ENCODE measurements at regions of chr9 and their contacts with region 1.

Region 1: DNA sequence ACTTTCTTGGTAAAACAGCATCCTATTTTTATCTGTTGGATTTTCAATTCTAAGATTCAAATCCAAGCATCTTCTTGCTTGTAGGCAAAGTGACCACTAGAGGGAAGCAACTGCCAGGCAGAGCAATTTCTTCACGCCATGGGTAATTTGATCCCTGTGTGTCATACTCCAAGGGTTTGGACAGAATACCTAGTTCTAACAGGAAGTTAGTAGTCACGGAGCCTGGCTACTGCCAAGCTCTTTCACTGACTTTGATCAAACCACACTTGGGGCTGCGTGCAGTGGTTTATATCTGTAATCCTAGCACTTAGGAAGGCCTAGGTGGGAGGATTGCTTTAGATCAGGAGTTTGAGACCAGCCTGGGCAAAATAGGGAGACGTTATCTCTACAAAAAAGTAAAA is 473.6 kb upstream of the TNC start:
- DNase-seq: peak; percentile 66
- H3K4me3 Mint-ChIP-seq: no peak overlapping the region
- H3K27ac Mint-ChIP-seq: peak overlapping the region; percentile 45
- H3K4me1 Mint-ChIP-seq: peaks cover 22% of the 10 kb centered on the region
- H3K27me3 Mint-ChIP-seq: no peaks in the 10 kb centered on the region
- CTCF ChIP-seq: no peak

Region 2: GRCh38 chr9:115498303-115498702 is 93.3 kb before region 1 on chr9:
- CTCF ChIA-PET with region 1: no interaction called
- intact Hi-C with region 1: no loop called
- DNase-seq: no peak
- H3K4me3 Mint-ChIP-seq: no peak overlapping the region
- H3K27ac Mint-ChIP-seq: no peak overlapping the region
- H3K4me1 Mint-ChIP-seq: peaks cover 15% of the 10 kb centered on the region
- H3K27me3 Mint-ChIP-seq: no peaks in the 10 kb centered on the region
- CTCF ChIP-seq: no peak

Region 3: DNA sequence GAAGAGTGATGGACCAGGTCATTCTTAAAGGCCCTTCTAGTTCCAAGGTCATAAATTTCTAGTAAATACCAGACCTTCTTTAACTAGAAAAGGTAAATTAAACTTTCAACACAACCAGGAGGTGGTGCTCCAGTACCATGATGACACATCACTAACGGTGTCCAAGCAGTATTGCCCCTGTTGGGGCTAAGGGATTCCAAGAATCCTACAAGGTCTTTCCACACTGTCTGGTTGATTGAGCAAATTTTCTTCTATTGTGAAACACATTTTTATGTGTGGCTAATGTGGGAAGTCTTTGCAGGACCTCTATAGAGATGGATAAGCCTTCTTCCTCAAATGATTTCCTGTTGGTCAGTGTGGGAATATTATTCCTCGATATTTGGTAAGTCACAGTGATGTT is 102.4 kb after region 1 on chr9:
- CTCF ChIA-PET with region 1: no interaction called
- intact Hi-C with region 1: loop called (anchors 5 kb)
- DNase-seq: peak; percentile 16
- H3K4me3 Mint-ChIP-seq: no peak overlapping the region
- H3K27ac Mint-ChIP-seq: peak overlapping the region; percentile 23
- H3K4me1 Mint-ChIP-seq: peaks cover 11% of the 10 kb centered on the region
- H3K27me3 Mint-ChIP-seq: no peaks in the 10 kb centered on the region
- CTCF ChIP-seq: no peak

Region 4: DNA sequence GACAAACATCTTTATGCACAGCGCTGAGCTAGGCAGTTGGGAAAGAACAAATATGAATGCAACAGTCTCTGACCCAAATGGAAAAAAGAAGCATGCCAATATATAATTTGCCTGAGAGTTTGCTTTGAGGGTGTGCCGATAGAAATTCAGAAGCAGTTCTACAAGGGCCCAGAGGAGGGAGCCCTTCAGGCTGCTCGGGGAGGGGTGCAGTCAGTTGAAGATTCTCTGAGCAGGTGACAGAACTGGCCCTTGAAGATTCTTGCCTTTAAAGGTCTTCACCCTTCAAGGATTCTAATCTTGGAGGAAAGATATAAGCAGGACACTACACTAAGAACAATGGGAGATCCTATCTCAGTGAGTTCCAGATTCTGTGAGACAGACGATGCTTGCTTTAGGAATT is 558.3 kb after region 1 on chr9:
- CTCF ChIA-PET with region 1: no interaction called
- intact Hi-C with region 1: loop called (anchors 5 kb)
- DNase-seq: peak; percentile 27
- H3K4me3 Mint-ChIP-seq: no peak overlapping the region
- H3K27ac Mint-ChIP-seq: no peak overlapping the region
- H3K4me1 Mint-ChIP-seq: no peaks in the 10 kb centered on the region
- H3K27me3 Mint-ChIP-seq: peaks cover 32% of the 10 kb centered on the region
- CTCF ChIP-seq: no peak

Region 5: DNA sequence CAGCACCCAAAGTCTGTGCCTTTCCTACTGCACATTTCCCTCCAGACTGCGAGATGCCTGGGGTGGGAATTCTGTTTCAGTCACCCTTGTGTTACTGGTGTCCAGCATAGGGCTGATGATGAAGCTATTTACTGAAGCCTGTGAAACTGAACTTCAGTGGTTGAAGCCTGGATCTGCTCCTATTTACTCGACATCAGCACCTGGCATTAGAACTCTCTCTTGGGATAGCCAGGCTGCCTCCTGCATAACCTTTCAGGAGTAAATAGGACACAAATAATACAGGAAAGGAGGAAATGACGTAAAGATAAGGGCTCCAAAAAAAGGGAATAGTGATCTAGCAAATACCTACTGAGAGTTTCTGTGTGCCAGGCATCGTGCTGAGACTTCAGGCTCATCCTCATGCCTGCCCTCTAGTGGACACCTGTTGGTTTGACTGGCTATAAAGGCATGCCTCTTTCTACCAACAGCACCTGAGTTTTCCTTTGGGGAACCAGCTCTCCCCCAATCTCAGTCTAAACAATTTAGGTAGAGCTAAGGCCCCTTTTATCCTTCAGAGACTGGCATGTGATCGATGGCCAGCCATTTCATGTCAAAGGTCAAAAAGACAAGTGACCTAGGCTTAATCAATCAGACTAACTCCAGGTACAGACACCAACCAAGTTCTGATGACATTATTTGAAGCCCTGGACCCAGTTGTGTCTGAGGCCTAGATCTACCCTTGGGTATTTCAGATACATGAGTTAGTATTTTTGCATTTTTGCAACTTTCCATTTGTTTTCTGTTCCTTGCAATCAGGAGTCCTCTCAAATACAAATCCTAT is 903.4 kb after region 1 on chr9:
- CTCF ChIA-PET with region 1: no interaction called
- intact Hi-C with region 1: loop called (anchors 2 kb)
- DNase-seq: peak; percentile 42
- H3K4me3 Mint-ChIP-seq: no peak overlapping the region
- H3K27ac Mint-ChIP-seq: no peak overlapping the region
- H3K4me1 Mint-ChIP-seq: no peaks in the 10 kb centered on the region
- H3K27me3 Mint-ChIP-seq: no peaks in the 10 kb centered on the region
- CTCF ChIP-seq: no peak

Region 6: DNA sequence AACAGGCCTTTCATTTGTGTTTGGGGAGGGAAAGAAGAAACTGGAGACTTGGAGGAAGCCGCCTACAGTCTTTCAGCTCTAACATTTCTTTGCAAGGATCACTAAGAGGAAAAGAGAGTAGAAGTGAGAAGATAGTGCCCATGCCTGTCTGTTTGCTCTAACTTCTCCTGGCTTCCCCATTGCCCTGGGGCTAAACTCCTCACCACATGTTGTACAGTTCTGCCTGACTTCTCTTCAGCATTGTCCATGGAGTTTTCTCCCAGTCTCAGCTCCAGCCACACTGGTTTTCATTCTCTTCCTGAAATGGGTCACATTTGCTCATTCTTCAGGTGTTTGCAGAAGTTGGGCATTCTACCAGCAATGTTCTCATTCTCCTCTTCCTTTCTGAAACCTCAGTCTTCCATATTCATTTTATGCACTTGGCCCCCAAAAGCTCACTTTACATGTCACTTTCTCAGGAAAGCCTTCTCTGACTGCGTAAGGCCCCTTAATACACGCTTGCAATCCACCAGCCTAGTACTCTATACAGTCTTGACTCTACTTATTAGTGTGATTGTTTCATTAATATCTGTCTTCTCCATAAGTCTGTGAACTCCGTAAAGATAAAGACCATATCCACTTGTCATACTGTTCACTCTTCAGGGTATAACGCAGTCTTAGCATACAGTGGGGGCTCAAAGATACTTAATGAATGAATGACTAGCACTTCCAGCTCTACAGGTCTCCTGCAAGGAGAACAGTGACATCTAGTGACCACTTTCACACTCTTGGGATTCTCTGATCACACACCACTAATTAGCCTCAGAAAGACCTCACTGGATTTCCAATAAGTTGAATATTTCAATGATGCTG is 1055.3 kb after region 1 on chr9:
- CTCF ChIA-PET with region 1: interaction called, 3 read pairs
- intact Hi-C with region 1: loop called (anchors 5 kb)
- DNase-seq: peak; percentile 7
- H3K4me3 Mint-ChIP-seq: no peak overlapping the region
- H3K27ac Mint-ChIP-seq: no peak overlapping the region
- H3K4me1 Mint-ChIP-seq: no peaks in the 10 kb centered on the region
- H3K27me3 Mint-ChIP-seq: peaks cover 12% of the 10 kb centered on the region
- CTCF ChIP-seq: peak; percentile 15